ENCODE measurements at regions of chr1 and their contacts with region 1.

Region 1: GRCh38 chr1:26999440-26999987 is 6.0 kb downstream of the TRNP1 start:
- DNase-seq: no peak
- H3K4me3 Mint-ChIP-seq: no peak overlapping the region
- H3K27ac Mint-ChIP-seq: no peak overlapping the region
- H3K4me1 Mint-ChIP-seq: peaks cover 9% of the 10 kb centered on the region
- H3K27me3 Mint-ChIP-seq: peaks cover 40% of the 10 kb centered on the region

Region 2: DNA sequence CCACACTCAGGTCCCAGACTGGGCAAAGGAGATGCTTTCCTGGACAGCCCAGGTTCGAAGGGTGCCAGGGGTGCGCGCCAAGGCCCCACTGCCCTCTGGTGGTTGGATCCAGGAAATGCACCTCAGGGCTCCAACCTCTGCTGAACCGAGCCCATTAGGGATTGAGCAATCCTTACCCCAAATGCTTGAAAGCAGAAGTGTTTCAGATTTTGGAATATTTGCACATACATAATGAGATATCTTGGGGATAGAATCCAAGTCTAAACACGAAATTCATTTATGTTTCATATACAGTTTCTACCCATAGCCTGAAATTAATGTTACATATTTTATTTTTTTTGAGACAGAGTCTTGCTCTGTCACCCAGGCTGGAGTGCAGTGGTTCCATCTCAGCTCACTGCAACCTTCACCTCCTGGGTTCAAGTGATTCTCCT is 98.0 kb after region 1 on chr1:
- intact Hi-C with region 1: loop called (anchors 1 kb)
- DNase-seq: peak; percentile 64
- H3K4me3 Mint-ChIP-seq: no peak overlapping the region
- H3K27ac Mint-ChIP-seq: no peak overlapping the region
- H3K4me1 Mint-ChIP-seq: peaks cover 14% of the 10 kb centered on the region
- H3K27me3 Mint-ChIP-seq: peaks cover 3% of the 10 kb centered on the region

Region 3: GRCh38 chr1:27136998-27137542 is 137.6 kb after region 1 on chr1:
- intact Hi-C with region 1: loop called (anchors 5 kb)
- DNase-seq: peak; percentile 71
- H3K4me3 Mint-ChIP-seq: peak overlapping the region; percentile 84
- H3K27ac Mint-ChIP-seq: peak overlapping the region; percentile 99
- H3K4me1 Mint-ChIP-seq: peaks cover 57% of the 10 kb centered on the region
- H3K27me3 Mint-ChIP-seq: no peaks in the 10 kb centered on the region

Region 4: GRCh38 chr1:27300341-27301051 is 301.0 kb after region 1 on chr1:
- intact Hi-C with region 1: no loop called
- DNase-seq: peak; percentile 61
- H3K4me3 Mint-ChIP-seq: no peak overlapping the region
- H3K27ac Mint-ChIP-seq: no peak overlapping the region
- H3K4me1 Mint-ChIP-seq: peaks cover 4% of the 10 kb centered on the region
- H3K27me3 Mint-ChIP-seq: no peaks in the 10 kb centered on the region